ENCODE measurements at regions of chr1 and their contacts with region 1.

Region 1: DNA sequence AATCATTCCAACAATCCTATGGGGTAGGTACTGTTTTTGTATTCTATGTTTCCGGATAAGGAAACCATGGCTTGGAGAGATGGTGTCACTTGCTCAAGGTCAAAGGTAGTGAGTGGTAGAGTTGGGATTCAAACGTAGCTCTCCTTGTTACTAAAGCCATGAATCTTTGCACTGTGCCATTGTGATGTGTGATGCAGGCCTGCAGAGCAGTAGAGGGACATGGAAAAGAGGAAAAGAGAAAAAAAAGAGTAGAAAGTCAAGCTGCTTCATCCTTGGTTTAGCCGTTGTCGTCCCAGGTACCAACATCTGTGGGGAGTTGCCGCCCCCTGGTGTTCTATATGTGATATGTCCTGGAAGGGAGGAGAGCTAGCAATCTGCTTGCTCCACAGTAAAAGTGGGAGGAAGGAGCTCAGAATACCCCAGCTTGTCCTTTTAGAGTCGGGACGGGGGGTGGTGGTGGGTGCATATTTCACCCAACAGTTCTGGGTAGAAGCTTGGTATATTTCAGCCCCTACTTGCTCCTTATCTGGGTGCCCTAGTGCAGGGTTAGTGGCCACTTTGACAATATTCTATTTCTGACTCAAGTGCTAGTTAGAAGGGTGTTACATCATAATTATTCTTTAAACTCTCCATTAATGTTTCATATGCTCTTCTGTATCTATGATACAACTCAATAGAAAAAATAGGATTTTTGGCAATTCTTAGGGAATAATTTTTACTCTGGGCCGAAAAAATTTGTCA is 98.4 kb downstream of the EBNA1BP2 start:
- DNase-seq: peak; percentile 66 to 76 (median 72)
- H3K4me3 ChIP-seq: no peak overlapping the region
- H3K4me3 Mint-ChIP-seq: no peak overlapping the region
- H3K27ac ChIP-seq: no peak overlapping the region
- H3K27ac Mint-ChIP-seq: peak overlapping the region in 3 of 7 donors; percentile 35 to 72 (median 70)
- H3K4me1 ChIP-seq: peaks cover 4% of the 10 kb centered on the region
- H3K4me1 Mint-ChIP-seq: peaks cover 2 to 9% (median 4%) of the 10 kb centered on the region in 4 donors
- H3K27me3 ChIP-seq: no peaks in the 10 kb centered on the region
- H3K27me3 Mint-ChIP-seq: no peaks in the 10 kb centered on the region

Region 2: GRCh38 chr1:42576935-42577334 is 496.7 kb before region 1 on chr1:
- CTCF ChIA-PET with region 1: interaction called, 15 read pairs
- POLR2A ChIA-PET with region 1: no interaction called
- intact Hi-C with region 1: loop called (anchors 1 kb)
- DNase-seq: no peak
- H3K4me3 ChIP-seq: no peak overlapping the region
- H3K4me3 Mint-ChIP-seq: no peak overlapping the region
- H3K27ac ChIP-seq: no peak overlapping the region
- H3K27ac Mint-ChIP-seq: no peak overlapping the region
- H3K4me1 ChIP-seq: no peaks in the 10 kb centered on the region
- H3K4me1 Mint-ChIP-seq: no peaks in the 10 kb centered on the region
- H3K27me3 ChIP-seq: no peaks in the 10 kb centered on the region
- H3K27me3 Mint-ChIP-seq: no peaks in the 10 kb centered on the region

Region 3: GRCh38 chr1:42713293-42713692 is 360.4 kb before region 1 on chr1:
- CTCF ChIA-PET with region 1: no interaction called
- POLR2A ChIA-PET with region 1: no interaction called
- intact Hi-C with region 1: no loop called
- DNase-seq: no peak
- H3K4me3 ChIP-seq: no peak overlapping the region
- H3K4me3 Mint-ChIP-seq: no peak overlapping the region
- H3K27ac ChIP-seq: no peak overlapping the region
- H3K27ac Mint-ChIP-seq: no peak overlapping the region
- H3K4me1 ChIP-seq: no peaks in the 10 kb centered on the region
- H3K4me1 Mint-ChIP-seq: peaks cover 0 to 8% (median 4%) of the 10 kb centered on the region in 4 donors
- H3K27me3 ChIP-seq: no peaks in the 10 kb centered on the region
- H3K27me3 Mint-ChIP-seq: no peaks in the 10 kb centered on the region

Region 4: DNA sequence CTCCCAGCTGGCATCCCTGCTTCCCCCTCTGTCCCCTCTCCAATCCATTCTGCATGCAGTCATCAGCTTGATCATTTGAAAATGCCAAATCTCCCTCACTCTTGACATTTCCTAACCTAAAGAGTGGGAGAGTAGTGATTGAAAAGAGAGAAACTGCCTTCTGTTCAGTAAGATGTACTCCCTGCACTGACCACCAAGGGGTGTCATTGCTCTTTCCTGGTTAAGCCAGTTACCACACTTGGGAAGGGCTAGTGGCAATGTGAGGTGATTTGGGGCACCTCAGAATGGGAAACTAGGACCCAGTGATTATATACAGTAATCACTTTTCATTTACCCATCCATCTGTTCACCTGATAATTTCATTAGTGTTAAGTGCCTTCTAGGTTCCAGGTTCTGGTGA is 295.8 kb before region 1 on chr1:
- CTCF ChIA-PET with region 1: interaction called, 54 read pairs
- POLR2A ChIA-PET with region 1: interaction called, 4 read pairs
- intact Hi-C with region 1: loop called (anchors 2 kb)
- DNase-seq: peak in 2 of 5 donors; percentile 19 to 28
- H3K4me3 ChIP-seq: no peak overlapping the region
- H3K4me3 Mint-ChIP-seq: no peak overlapping the region
- H3K27ac ChIP-seq: no peak overlapping the region
- H3K27ac Mint-ChIP-seq: peak overlapping the region in 3 of 7 donors; percentile 7 to 29 (median 24)
- H3K4me1 ChIP-seq: no peaks in the 10 kb centered on the region
- H3K4me1 Mint-ChIP-seq: peaks cover 4 to 14% (median 11%) of the 10 kb centered on the region in 4 donors
- H3K27me3 ChIP-seq: no peaks in the 10 kb centered on the region
- H3K27me3 Mint-ChIP-seq: no peaks in the 10 kb centered on the region

Region 5: GRCh38 chr1:42913426-42914091 is 160.1 kb before region 1 on chr1:
- CTCF ChIA-PET with region 1: interaction called, 864 read pairs
- POLR2A ChIA-PET with region 1: interaction called, 44 read pairs
- intact Hi-C with region 1: loop called (anchors 1 kb)
- DNase-seq: peak; percentile 70 to 84 (median 78)
- H3K4me3 ChIP-seq: no peak overlapping the region
- H3K4me3 Mint-ChIP-seq: no peak overlapping the region
- H3K27ac ChIP-seq: no peak overlapping the region
- H3K27ac Mint-ChIP-seq: no peak overlapping the region
- H3K4me1 ChIP-seq: no peaks in the 10 kb centered on the region
- H3K4me1 Mint-ChIP-seq: peaks cover 0 to 5% (median 2%) of the 10 kb centered on the region in 4 donors
- H3K27me3 ChIP-seq: no peaks in the 10 kb centered on the region
- H3K27me3 Mint-ChIP-seq: peaks cover 2 to 4% of the 10 kb centered on the region in 2 donors

Region 6: GRCh38 chr1:42952303-42953001 is 121.2 kb before region 1 on chr1:
- CTCF ChIA-PET with region 1: interaction called, 14 read pairs
- POLR2A ChIA-PET with region 1: interaction called, 5 read pairs
- intact Hi-C with region 1: no loop called
- DNase-seq: peak in 3 of 5 donors; percentile 32 to 47 (median 37)
- H3K4me3 ChIP-seq: peak overlapping the region; percentile 1 to 38
- H3K4me3 Mint-ChIP-seq: peak overlapping the region; percentile 36 to 72 (median 62)
- H3K27ac ChIP-seq: peak overlapping the region; percentile 50
- H3K27ac Mint-ChIP-seq: peak overlapping the region; percentile 52 to 97 (median 70)
- H3K4me1 ChIP-seq: peaks cover 93% of the 10 kb centered on the region
- H3K4me1 Mint-ChIP-seq: peaks cover 60 to 94% (median 83%) of the 10 kb centered on the region in 4 donors
- H3K27me3 ChIP-seq: no peaks in the 10 kb centered on the region
- H3K27me3 Mint-ChIP-seq: no peaks in the 10 kb centered on the region

Region 7: GRCh38 chr1:43058545-43059355 is 14.9 kb before region 1 on chr1:
- CTCF ChIA-PET with region 1: interaction called, 31 read pairs
- POLR2A ChIA-PET with region 1: interaction called, 3 read pairs
- intact Hi-C with region 1: no loop called
- DNase-seq: no peak
- H3K4me3 ChIP-seq: no peak overlapping the region
- H3K4me3 Mint-ChIP-seq: peak overlapping the region in 2 of 8 donors; percentile 16 to 38
- H3K27ac ChIP-seq: no peak overlapping the region
- H3K27ac Mint-ChIP-seq: peak overlapping the region in 1 of 7 donors; percentile 20
- H3K4me1 ChIP-seq: peaks cover 10% of the 10 kb centered on the region
- H3K4me1 Mint-ChIP-seq: peaks cover 9 to 19% (median 11%) of the 10 kb centered on the region in 4 donors
- H3K27me3 ChIP-seq: no peaks in the 10 kb centered on the region
- H3K27me3 Mint-ChIP-seq: peaks cover 2 to 5% of the 10 kb centered on the region in 2 donors